B cell (primary cell): ENCODE measurements at regions of chr3 and their contacts with region 1.

Region 1: DNA sequence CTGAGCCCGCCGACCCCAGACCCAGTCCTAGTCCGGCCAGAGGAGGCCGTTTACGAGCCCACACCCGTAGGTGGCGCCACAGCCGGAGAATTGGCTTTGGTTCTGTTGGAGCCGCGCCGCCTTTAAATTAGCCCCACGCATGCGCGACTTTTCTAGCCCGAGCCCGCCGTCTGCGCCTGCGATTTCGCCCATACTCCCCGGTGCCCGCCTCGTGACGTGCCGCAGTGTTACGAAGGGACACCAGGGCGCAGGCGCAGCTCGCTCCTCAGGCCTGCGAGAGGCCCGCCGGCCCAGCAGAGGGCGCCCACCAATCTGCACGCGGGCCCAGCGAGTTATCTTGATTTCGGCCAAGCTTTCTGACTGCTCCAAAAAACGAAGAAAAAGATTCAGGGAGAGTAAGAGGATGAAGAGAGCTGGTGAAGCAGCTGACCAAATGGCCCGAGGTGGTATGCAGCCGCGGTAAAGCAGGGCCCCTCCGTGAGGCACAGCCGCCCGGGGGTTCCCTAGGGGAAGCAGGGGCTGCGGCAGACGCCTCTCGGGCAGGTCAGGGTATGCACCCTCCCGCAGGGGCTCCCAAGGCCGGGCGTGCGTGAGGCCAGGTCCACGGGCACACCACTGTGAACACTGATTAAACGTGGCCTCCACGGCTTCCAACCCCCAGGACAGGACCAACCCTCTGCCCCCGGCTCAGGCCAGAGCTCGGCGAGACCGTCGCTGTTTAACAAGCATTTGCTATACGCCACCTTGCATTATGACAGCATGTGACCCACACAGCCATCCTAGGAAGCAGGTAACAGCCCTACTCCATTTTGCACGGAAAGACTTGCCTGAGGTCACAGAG is 32.8 kb downstream of the RPN1 start:
- DNase-seq: peak; percentile 99
- ATAC-seq: peak; percentile 95
- H3K4me3 ChIP-seq: peak overlapping the region; percentile 67 to 98 (median 78)
- H3K4me3 Mint-ChIP-seq: peak overlapping the region; percentile 96
- H3K27ac ChIP-seq: peak overlapping the region; percentile 71 to 90
- H3K27ac Mint-ChIP-seq: peak overlapping the region; percentile 91
- H3K4me1 ChIP-seq: peaks cover 11 to 23% of the 10 kb centered on the region in 2 donors
- H3K4me1 Mint-ChIP-seq: peaks cover 25% of the 10 kb centered on the region
- H3K27me3 ChIP-seq: no peaks in the 10 kb centered on the region
- H3K27me3 Mint-ChIP-seq: no peaks in the 10 kb centered on the region
- CTCF ChIP-seq: peak; percentile 99

Region 2: GRCh38 chr3:128075516-128076482 is 542.0 kb before region 1 on chr3:
- CTCF ChIA-PET with region 1: interaction called, 3 read pairs
- POLR2A ChIA-PET with region 1: no interaction called
- intact Hi-C with region 1: loop called (anchors 1 kb)
- DNase-seq: peak; percentile 91
- ATAC-seq: peak; percentile 88
- H3K4me3 ChIP-seq: peak overlapping the region; percentile 38 to 65 (median 60)
- H3K4me3 Mint-ChIP-seq: peak overlapping the region; percentile 85
- H3K27ac ChIP-seq: peak overlapping the region in 1 of 2 donors; percentile 28
- H3K27ac Mint-ChIP-seq: no peak overlapping the region
- H3K4me1 ChIP-seq: peaks cover 17 to 26% of the 10 kb centered on the region in 2 donors
- H3K4me1 Mint-ChIP-seq: peaks cover 17% of the 10 kb centered on the region
- H3K27me3 ChIP-seq: peaks cover 0 to 8% (median 1%) of the 10 kb centered on the region in 4 experiments
- H3K27me3 Mint-ChIP-seq: no peaks in the 10 kb centered on the region
- CTCF ChIP-seq: peak; percentile 97

Region 3: GRCh38 chr3:128650096-128651050 is 32.6 kb after region 1 on chr3 and contains the start of gene RPN1:
- CTCF ChIA-PET with region 1: interaction called, 10 read pairs
- POLR2A ChIA-PET with region 1: no interaction called
- intact Hi-C with region 1: loop called (anchors 1 kb)
- DNase-seq: peak; percentile 96
- ATAC-seq: peak; percentile 97
- H3K4me3 ChIP-seq: peak within 1 kb of the TSS; percentile 74 to 100 (median 90)
- H3K4me3 Mint-ChIP-seq: peak within 1 kb of the TSS; percentile 89
- H3K27ac ChIP-seq: peak within 1 kb of the TSS; percentile 89 to 98
- H3K27ac Mint-ChIP-seq: peak within 1 kb of the TSS; percentile 91
- H3K4me1 ChIP-seq: peaks cover 15 to 25% of the 10 kb centered on the region in 2 donors
- H3K4me1 Mint-ChIP-seq: peaks cover 31% of the 10 kb centered on the region
- H3K27me3 ChIP-seq: no peaks in the 10 kb centered on the region
- H3K27me3 Mint-ChIP-seq: no peaks in the 10 kb centered on the region
- CTCF ChIP-seq: no peak
- total RNA-seq, gene RPN1: 80.6 and 83.2 TPM in 2 replicates

Region 4: GRCh38 chr3:128794770-128795649 is 177.2 kb after region 1 on chr3:
- CTCF ChIA-PET with region 1: interaction called, 29 read pairs
- POLR2A ChIA-PET with region 1: no interaction called
- intact Hi-C with region 1: loop called (anchors 1 kb)
- DNase-seq: peak; percentile 81
- ATAC-seq: peak; percentile 99
- H3K4me3 ChIP-seq: no peak overlapping the region
- H3K4me3 Mint-ChIP-seq: no peak overlapping the region
- H3K27ac ChIP-seq: no peak overlapping the region
- H3K27ac Mint-ChIP-seq: peak overlapping the region; percentile 32
- H3K4me1 ChIP-seq: peaks cover 17 to 22% of the 10 kb centered on the region in 2 donors
- H3K4me1 Mint-ChIP-seq: peaks cover 49% of the 10 kb centered on the region
- H3K27me3 ChIP-seq: no peaks in the 10 kb centered on the region
- H3K27me3 Mint-ChIP-seq: no peaks in the 10 kb centered on the region
- CTCF ChIP-seq: peak; percentile 80

Region 5: DNA sequence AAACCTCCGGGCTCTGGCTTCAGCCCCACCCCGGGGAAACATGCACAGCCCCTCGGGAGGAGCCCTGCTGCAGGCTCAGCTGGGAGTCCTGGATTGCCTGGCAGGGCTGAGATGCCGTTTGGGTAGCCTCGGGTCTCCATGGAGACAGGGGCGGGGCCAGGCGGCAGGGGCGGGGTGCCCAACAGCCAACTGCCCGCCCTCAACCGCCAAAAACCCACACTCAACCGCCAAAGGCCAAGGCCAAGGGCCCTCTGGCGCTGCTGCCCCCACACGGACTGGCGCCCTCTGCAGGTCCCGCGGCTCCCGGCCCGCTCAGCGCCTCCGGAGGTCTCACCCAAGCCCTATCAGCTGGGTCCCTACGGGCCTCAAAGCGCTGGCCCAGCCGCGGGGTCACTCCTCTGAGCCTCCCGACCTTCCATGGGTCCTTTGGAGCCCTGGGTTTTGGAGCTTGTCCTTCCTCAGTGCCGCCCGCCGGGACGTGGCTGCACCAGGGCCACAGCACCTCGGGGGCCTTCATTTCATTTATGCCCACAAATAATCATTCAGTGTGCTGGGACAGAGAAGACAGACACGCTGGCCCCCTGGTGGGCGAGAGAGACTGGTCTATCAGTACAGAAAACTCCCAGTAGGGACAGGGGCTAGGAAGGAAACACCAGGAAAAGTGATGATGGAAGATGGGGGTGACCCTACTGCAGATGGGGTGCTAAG is 228.2 kb after region 1 on chr3:
- CTCF ChIA-PET with region 1: interaction called, 18 read pairs
- POLR2A ChIA-PET with region 1: no interaction called
- intact Hi-C with region 1: no loop called
- DNase-seq: peak; percentile 82
- ATAC-seq: peak; percentile 86
- H3K4me3 ChIP-seq: peak overlapping the region in 4 of 5 experiments; percentile 45 to 70 (median 58)
- H3K4me3 Mint-ChIP-seq: peak overlapping the region; percentile 85
- H3K27ac ChIP-seq: peak overlapping the region in 1 of 2 donors; percentile 52
- H3K27ac Mint-ChIP-seq: peak overlapping the region; percentile 56
- H3K4me1 ChIP-seq: peaks cover 11 to 17% of the 10 kb centered on the region in 2 donors
- H3K4me1 Mint-ChIP-seq: peaks cover 11% of the 10 kb centered on the region
- H3K27me3 ChIP-seq: no peaks in the 10 kb centered on the region
- H3K27me3 Mint-ChIP-seq: no peaks in the 10 kb centered on the region
- CTCF ChIP-seq: peak; percentile 85